SK-N-SH (cell line): ENCODE measurements at regions of chr6 and their contacts with region 1.

Region 1: DNA sequence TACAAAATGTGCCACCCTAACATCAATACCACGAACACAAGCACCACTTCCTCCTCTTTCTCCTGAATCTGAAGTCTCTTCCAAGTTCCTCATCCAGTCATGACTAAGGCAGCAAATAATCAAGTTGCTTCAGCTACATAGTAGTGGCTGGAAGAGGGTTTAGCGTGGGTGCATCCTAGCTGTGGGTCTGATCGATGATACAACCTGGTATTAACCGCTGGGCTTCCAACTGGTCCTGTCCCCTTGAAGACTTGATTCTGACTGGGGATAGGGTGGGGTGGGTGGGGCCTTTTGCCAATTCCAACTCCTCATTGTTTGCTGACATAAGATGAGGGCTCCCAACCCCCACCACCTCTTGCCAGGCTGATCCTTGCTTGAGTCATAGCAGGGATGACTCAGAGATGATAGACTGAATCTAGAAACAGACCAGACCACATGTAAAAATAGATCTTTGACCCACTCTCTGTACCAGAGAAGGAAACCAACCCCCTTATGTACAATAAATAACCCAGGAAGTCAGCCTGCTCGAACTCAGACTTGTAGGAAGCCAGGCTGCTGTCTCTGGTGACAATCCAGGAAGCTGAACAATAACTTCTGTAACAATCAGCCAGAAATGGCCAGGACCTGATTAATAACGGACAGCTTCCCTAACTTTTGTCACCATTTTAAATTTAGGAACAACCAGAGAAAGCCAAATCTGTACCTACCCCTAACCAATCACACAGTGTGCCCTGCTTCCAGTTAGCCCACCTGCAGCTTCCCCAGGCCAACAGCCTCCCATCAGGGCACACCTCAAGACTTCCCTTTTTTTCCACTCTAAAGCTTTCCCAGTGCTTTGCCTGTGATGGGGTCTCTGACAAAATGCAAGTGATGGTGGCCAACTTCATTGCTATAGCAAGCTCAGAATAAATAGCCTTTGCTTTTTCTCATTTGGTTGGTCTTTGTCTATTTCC is 68.9 kb upstream of the FAM184A start:
- DNase-seq: no peak
- H3K4me3 ChIP-seq: peak overlapping the region in 1 of 2 experiments; percentile 36; a peak in 2 of 4 replicates
- H3K27ac ChIP-seq: peak overlapping the region; percentile 85 to 97
- H3K4me1 ChIP-seq: peaks cover 16 to 24% of the 10 kb centered on the region in 2 experiments
- H3K27me3 ChIP-seq: no peaks in the 10 kb centered on the region
- CTCF ChIP-seq: no peak
- EP300 ChIP-seq: peak; percentile 60 to 91; a peak in 3 of 4 replicates
- RAD21 ChIP-seq: no peak

Region 2: DNA sequence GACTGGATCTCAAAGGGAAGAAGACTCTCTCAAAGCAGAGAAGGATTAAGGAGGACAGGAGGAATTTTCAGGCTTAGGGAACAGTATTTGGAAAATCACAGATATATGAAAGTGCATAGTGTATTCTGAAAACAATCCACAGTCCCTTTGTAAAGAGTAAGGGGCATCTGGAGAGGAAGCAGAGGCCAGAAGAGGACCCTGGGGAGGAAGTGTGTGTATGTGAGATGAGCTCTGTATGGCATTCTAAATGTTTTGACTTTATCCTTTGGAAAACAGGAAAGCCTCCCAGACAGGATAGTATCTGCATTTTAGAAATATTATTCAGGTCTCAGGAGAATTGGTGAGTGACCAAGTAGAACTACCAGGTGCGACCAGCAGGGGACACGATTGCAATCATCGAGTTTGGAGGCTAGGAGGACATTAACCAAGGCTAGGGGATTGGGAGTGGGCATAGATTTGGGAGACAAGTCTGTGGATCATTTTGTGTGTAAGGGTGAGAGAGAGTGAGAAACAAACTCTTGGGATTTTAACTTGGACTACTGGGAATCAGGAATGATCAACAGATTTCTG is 30.6 kb before region 1 on chr6:
- CTCF ChIA-PET with region 1: no interaction called
- POLR2A ChIA-PET with region 1: no interaction called
- DNase-seq: no peak
- H3K4me3 ChIP-seq: no peak overlapping the region
- H3K27ac ChIP-seq: no peak overlapping the region
- H3K4me1 ChIP-seq: no peaks in the 10 kb centered on the region
- H3K27me3 ChIP-seq: no peaks in the 10 kb centered on the region
- CTCF ChIP-seq: peak; percentile 45
- EP300 ChIP-seq: no peak
- RAD21 ChIP-seq: no peak

Region 3: GRCh38 chr6:119129148-119129967 is 18.0 kb before region 1 on chr6:
- CTCF ChIA-PET with region 1: interaction called, 29 read pairs
- POLR2A ChIA-PET with region 1: no interaction called
- DNase-seq: peak; percentile 50
- H3K4me3 ChIP-seq: peak overlapping the region in 1 of 2 experiments; percentile 24; a peak in 2 of 4 replicates
- H3K27ac ChIP-seq: peak overlapping the region; percentile 67 to 94
- H3K4me1 ChIP-seq: peaks cover 18 to 21% of the 10 kb centered on the region in 2 experiments
- H3K27me3 ChIP-seq: no peaks in the 10 kb centered on the region
- CTCF ChIP-seq: peak; percentile 91
- EP300 ChIP-seq: no peak
- RAD21 ChIP-seq: peak; percentile 77

Region 4: GRCh38 chr6:119172824-119173223 is 25.4 kb after region 1 on chr6:
- CTCF ChIA-PET with region 1: interaction called, 11 read pairs
- POLR2A ChIA-PET with region 1: no interaction called
- DNase-seq: no peak
- H3K4me3 ChIP-seq: no peak overlapping the region
- H3K27ac ChIP-seq: no peak overlapping the region; a peak in 1 of 4 replicates
- H3K4me1 ChIP-seq: peaks cover 0 to 8% of the 10 kb centered on the region in 2 experiments; a peak in 2 of 4 replicates
- H3K27me3 ChIP-seq: no peaks in the 10 kb centered on the region
- CTCF ChIP-seq: no peak
- EP300 ChIP-seq: no peak
- RAD21 ChIP-seq: no peak

Region 5: DNA sequence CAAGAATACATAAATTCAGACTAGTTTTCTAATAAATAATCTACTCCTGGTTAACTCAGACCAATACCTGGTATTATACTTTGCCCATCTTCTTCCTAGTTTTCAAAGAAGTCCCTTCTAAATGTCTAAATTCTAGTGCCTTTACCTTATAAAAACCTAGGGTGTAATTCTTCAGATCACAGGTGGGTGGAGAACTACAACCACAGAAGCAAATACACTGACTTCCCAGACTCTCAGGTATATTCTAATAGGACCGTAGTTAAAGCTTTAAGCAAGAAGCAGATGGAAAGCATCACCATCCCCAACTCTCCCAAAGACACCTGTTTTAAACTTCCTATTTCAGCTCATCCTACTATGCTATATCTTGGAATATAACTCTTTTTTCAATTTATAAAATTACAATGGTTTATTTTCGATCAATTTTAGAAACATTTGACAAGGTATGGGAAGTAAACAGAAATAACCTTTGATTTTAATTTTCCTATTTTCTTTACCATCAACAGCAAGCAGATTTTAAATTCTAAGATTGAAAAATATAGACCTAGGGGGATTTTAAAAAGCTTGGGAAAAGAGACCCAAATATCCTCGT is 186.4 kb after region 1 on chr6:
- CTCF ChIA-PET with region 1: interaction called, 24 read pairs
- POLR2A ChIA-PET with region 1: no interaction called
- DNase-seq: peak; percentile 22
- H3K4me3 ChIP-seq: no peak overlapping the region
- H3K27ac ChIP-seq: peak overlapping the region in 1 of 2 experiments; percentile 64; a peak in 1 of 4 replicates
- H3K4me1 ChIP-seq: peaks cover 0 to 23% of the 10 kb centered on the region in 2 experiments; a peak in 2 of 4 replicates
- H3K27me3 ChIP-seq: no peaks in the 10 kb centered on the region
- CTCF ChIP-seq: peak; percentile 45
- EP300 ChIP-seq: no peak
- RAD21 ChIP-seq: peak; percentile 68

Region 6: DNA sequence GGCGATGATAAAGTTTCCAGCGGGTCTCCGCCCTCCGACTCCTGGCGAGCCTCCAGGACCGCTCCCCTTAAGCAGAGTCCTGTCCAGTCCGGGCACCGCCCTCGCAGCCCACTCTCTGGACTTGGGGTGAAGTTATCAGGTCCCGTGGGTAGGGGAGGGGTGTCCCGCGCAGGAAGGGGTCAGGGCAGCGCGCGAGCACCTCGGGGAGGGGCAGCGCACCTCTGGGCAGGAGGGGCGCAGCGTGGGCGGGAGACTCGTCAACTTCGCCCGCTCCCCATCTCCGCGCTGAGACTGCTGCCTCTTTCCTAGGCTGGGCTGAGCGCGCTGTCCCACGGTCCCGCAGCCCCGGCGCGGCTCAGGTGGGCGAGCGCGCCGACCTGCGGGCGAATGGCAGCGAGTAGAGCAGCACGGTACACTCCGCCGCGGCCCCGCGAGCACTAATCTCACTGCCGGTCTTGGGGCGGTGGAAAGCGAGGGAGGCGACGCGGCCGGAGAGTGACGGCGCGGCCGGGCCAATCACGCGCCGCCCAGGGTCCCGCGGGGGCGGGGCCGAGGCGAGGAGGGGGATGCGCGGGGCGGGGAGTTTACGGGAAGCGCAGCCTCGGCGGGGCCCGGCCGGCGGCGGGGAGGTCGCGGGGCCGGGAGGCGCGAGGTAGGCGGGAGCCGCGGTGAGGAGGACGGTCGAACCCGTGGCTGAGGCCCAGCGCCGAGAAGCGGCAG is 202.1 kb after region 1 on chr6 and contains the start of gene MAN1A1:
- CTCF ChIA-PET with region 1: interaction called, 32 read pairs
- POLR2A ChIA-PET with region 1: interaction called, 4 read pairs
- DNase-seq: peak; percentile 99
- H3K4me3 ChIP-seq: peak within 1 kb of the TSS; percentile 87 to 94
- H3K27ac ChIP-seq: peak within 1 kb of the TSS; percentile 68 to 86
- H3K4me1 ChIP-seq: peaks cover 0 to 11% of the 10 kb centered on the region in 2 experiments; a peak in 3 of 4 replicates
- H3K27me3 ChIP-seq: no peaks in the 10 kb centered on the region
- CTCF ChIP-seq: no peak; the same call in 1 of the 2 replicates
- EP300 ChIP-seq: no peak
- RAD21 ChIP-seq: no peak; the same call in 1 of the 2 replicates
- polyA plus RNA-seq, gene MAN1A1: 28.0 and 32.4 TPM in 2 replicates

Region 7: DNA sequence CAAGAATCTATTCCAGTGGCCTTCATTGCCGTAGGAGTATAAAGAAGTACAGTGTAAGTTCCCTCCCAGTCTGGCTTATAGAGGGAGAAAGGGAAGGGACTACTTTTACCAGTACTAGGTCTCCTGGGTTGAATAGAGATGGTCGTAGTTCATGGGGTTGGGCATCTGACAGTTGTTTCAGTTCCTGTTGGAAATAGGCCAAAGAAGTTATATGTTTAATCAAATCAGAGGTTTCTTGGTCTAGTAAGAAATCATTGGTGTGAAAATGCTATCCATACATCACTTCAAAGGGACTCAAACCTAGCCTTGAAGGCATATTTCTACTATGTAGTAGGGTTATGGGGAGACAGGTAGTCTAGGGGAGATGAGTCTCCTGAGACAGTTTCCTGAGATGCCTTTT is 247.8 kb after region 1 on chr6:
- CTCF ChIA-PET with region 1: no interaction called
- POLR2A ChIA-PET with region 1: no interaction called
- DNase-seq: no peak
- H3K4me3 ChIP-seq: no peak overlapping the region
- H3K27ac ChIP-seq: no peak overlapping the region
- H3K4me1 ChIP-seq: no peaks in the 10 kb centered on the region
- H3K27me3 ChIP-seq: no peaks in the 10 kb centered on the region
- CTCF ChIP-seq: no peak
- EP300 ChIP-seq: no peak
- RAD21 ChIP-seq: no peak

Region 8: GRCh38 chr6:119501798-119502483 is 354.6 kb after region 1 on chr6:
- CTCF ChIA-PET with region 1: no interaction called
- POLR2A ChIA-PET with region 1: no interaction called
- DNase-seq: no peak
- H3K4me3 ChIP-seq: no peak overlapping the region
- H3K27ac ChIP-seq: no peak overlapping the region
- H3K4me1 ChIP-seq: no peaks in the 10 kb centered on the region; a peak in 1 of 4 replicates
- H3K27me3 ChIP-seq: no peaks in the 10 kb centered on the region
- CTCF ChIP-seq: no peak
- EP300 ChIP-seq: no peak
- RAD21 ChIP-seq: no peak